ENCODE measurements at regions of chr4 and their contacts with region 1.

Region 1: GRCh38 chr4:124262211-124263179 is 450.0 kb downstream of the ANKRD50 start:
- DNase-seq: peak; percentile 60 to 74
- H3K4me3 ChIP-seq: no peak overlapping the region
- H3K27ac ChIP-seq: no peak overlapping the region
- H3K4me1 ChIP-seq: no peaks in the 10 kb centered on the region
- H3K27me3 ChIP-seq: no peaks in the 10 kb centered on the region
- CTCF ChIP-seq: peak; percentile 81 to 85

Region 2: DNA sequence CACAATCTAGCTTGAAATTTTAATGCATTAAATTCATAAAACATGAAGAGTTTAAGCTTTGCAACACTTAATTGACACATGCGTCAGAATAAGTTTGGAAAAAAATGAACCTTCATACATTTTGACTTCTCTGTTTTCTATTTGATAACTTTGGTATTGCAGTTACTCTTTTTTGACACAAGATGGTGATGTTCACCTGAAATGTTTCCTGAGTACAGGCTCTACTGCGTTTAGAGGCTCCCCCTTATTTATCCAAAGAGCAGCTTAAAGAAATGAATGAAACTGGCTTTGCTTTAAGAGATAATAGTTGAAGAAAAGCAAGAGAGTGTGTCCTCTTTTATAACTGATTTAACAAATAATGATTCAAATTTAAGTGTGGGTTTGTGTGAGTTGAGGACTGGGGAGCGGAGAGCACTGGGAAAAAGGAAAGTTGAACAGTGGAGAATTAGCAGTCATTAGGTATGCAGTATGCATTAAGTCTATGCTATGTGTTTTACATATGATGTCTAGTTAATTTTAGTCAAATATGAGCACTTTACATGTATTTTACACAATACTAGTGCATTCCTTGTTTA is 1159.5 kb before region 1 on chr4:
- intact Hi-C with region 1: loop called (anchors 10 kb)
- DNase-seq: no peak
- H3K4me3 ChIP-seq: no peak overlapping the region
- H3K27ac ChIP-seq: no peak overlapping the region
- H3K4me1 ChIP-seq: no peaks in the 10 kb centered on the region
- H3K27me3 ChIP-seq: no peaks in the 10 kb centered on the region
- CTCF ChIP-seq: peak; percentile 71 to 81

Region 3: GRCh38 chr4:123776254-123776653 is 486.2 kb before region 1 on chr4:
- intact Hi-C with region 1: loop called (anchors 10 kb)
- DNase-seq: no peak
- H3K4me3 ChIP-seq: no peak overlapping the region
- H3K27ac ChIP-seq: no peak overlapping the region
- H3K4me1 ChIP-seq: peaks cover 0 to 10% (median 5%) of the 10 kb centered on the region in 4 donors
- H3K27me3 ChIP-seq: no peaks in the 10 kb centered on the region
- CTCF ChIP-seq: no peak